Calu3 (cell line): ENCODE measurements at regions of chr2 and their contacts with region 1.

Region 1: DNA sequence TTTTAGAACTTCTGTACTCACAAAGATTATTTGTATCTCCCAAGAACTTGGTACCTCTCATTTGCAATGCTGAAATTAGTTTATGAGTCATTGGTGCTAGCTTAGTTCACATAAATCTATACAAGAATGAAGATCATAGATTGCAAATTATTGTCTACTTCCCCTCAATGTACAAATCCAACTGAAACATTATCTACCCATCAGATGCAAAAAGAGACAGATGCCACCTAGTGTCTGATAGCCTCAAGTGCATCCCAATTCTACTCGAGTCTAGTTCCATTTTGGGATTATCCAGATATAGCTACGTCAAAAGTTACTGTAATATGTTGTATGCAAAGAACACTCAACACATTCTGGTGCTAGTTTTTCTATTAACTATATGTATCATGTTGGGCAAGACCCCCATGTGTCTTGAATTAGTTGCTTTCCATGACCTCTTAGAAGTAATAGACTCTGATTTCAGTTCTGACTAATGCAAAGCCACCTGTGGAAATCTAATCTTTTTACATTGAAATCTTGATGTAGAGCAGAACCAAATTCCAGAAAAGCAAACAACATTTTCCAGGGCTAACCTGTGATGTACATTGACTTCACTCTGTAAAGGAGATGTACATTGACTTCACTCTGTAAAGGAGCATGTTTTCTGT is 210.0 kb downstream of the RBM43 start:
- DNase-seq: peak; percentile 48
- H3K4me3 Mint-ChIP-seq: no peak overlapping the region
- H3K27ac Mint-ChIP-seq: no peak overlapping the region
- H3K4me1 Mint-ChIP-seq: peaks cover 35% of the 10 kb centered on the region
- H3K27me3 Mint-ChIP-seq: no peaks in the 10 kb centered on the region
- CTCF ChIP-seq: peak; percentile 38

Region 2: GRCh38 chr2:150624001-150624401 is 427.7 kb before region 1 on chr2:
- CTCF ChIA-PET with region 1: no interaction called
- intact Hi-C with region 1: loop called (anchors 5 kb)
- DNase-seq: no peak
- H3K4me3 Mint-ChIP-seq: no peak overlapping the region
- H3K27ac Mint-ChIP-seq: no peak overlapping the region
- H3K4me1 Mint-ChIP-seq: peaks cover 10% of the 10 kb centered on the region
- H3K27me3 Mint-ChIP-seq: no peaks in the 10 kb centered on the region
- CTCF ChIP-seq: no peak

Region 3: DNA sequence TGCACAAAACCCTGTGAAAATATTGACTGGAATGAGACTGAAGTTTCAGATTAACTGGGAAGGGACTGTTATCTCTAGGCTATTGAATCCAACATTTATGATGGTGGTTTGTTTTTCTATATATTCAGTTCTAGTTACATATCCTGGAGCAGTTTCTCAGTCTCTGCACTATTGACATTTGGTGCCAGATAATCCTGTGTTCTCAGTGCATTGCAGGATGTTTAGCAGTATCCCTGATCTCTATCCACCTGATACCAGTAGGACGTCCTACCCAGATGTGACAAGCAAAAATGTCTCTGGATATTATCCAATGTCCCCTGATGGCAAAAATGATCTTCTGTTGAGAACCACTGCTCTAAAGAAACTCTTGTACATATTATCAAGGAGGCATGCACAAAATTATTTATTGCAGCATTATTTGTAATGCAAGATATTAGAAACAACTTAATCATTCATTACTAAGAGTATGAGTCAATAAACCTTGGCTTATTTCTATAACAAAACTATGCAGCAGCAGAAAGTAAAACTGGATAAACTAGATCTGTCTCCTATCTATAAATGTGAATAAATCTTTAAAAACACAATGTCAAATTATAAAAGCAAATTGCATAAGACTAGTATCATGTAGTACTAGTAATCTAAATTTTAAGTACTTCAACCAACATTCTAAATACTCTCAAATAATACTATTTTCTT is 195.0 kb before region 1 on chr2:
- CTCF ChIA-PET with region 1: no interaction called
- intact Hi-C with region 1: loop called (anchors 10 kb)
- DNase-seq: no peak
- H3K4me3 Mint-ChIP-seq: no peak overlapping the region
- H3K27ac Mint-ChIP-seq: no peak overlapping the region
- H3K4me1 Mint-ChIP-seq: peaks cover 57% of the 10 kb centered on the region
- H3K27me3 Mint-ChIP-seq: no peaks in the 10 kb centered on the region
- CTCF ChIP-seq: no peak